B cell (primary cell): ENCODE measurements at regions of chr2 and their contacts with region 1.

Region 1: DNA sequence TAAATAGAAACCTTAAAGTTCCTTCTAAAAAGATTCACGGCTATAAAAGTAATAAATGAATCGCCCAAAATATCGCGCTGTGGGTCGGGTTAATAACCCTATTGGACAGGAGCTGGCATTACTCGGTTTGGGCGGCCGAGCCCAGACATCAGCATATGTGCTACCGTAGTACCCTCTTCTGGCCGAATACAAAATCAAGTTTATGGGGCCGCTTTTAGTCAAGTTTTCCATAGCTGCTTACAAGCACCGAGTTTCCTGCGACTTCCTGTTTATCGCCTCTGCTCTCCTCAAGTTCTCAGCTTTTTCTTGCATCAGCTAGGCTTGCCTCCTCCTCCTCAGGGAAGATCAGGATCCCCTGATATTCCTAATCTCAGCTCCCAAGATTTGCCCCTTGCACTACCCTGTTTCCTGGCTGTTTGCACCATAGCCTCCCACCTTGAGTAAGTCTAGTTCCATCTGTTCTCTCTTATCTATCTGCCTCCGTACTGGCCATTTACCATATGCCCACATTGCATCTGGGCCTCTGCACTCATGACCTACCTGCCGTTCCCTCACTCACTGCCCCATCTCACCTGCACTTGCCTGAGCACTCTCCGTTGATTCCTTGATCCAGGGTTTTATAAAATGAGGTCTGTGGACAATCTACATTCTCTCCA is 56.1 kb downstream of the SLC35F5 start:
- DNase-seq: peak; percentile 77
- ATAC-seq: peak; percentile 92
- H3K4me3 ChIP-seq: peak overlapping the region in 3 of 5 experiments; percentile 23 to 38 (median 27)
- H3K4me3 Mint-ChIP-seq: peak overlapping the region; percentile 73
- H3K27ac ChIP-seq: no peak overlapping the region
- H3K27ac Mint-ChIP-seq: peak overlapping the region; percentile 64
- H3K4me1 ChIP-seq: peaks cover 17 to 20% of the 10 kb centered on the region in 2 donors
- H3K4me1 Mint-ChIP-seq: peaks cover 28% of the 10 kb centered on the region
- H3K27me3 ChIP-seq: no peaks in the 10 kb centered on the region
- H3K27me3 Mint-ChIP-seq: no peaks in the 10 kb centered on the region
- CTCF ChIP-seq: peak; percentile 74

Region 2: GRCh38 chr2:113602869-113603466 is 97.3 kb before region 1 on chr2:
- CTCF ChIA-PET with region 1: interaction called, 5 read pairs
- POLR2A ChIA-PET with region 1: no interaction called
- intact Hi-C with region 1: loop called (anchors 5 kb)
- DNase-seq: no peak
- ATAC-seq: peak; percentile 37
- H3K4me3 ChIP-seq: peak overlapping the region in 4 of 5 experiments; percentile 34 to 70 (median 52)
- H3K4me3 Mint-ChIP-seq: peak overlapping the region; percentile 97
- H3K27ac ChIP-seq: peak overlapping the region; percentile 56 to 64
- H3K27ac Mint-ChIP-seq: peak overlapping the region; percentile 99
- H3K4me1 ChIP-seq: peaks cover 0 to 8% of the 10 kb centered on the region in 2 donors
- H3K4me1 Mint-ChIP-seq: peaks cover 10% of the 10 kb centered on the region
- H3K27me3 ChIP-seq: no peaks in the 10 kb centered on the region
- H3K27me3 Mint-ChIP-seq: no peaks in the 10 kb centered on the region
- CTCF ChIP-seq: no peak